Posterior vena cava (tissue), 2 donors: ENCODE measurements at regions of chr17 and their contacts with region 1.

Region 1: DNA sequence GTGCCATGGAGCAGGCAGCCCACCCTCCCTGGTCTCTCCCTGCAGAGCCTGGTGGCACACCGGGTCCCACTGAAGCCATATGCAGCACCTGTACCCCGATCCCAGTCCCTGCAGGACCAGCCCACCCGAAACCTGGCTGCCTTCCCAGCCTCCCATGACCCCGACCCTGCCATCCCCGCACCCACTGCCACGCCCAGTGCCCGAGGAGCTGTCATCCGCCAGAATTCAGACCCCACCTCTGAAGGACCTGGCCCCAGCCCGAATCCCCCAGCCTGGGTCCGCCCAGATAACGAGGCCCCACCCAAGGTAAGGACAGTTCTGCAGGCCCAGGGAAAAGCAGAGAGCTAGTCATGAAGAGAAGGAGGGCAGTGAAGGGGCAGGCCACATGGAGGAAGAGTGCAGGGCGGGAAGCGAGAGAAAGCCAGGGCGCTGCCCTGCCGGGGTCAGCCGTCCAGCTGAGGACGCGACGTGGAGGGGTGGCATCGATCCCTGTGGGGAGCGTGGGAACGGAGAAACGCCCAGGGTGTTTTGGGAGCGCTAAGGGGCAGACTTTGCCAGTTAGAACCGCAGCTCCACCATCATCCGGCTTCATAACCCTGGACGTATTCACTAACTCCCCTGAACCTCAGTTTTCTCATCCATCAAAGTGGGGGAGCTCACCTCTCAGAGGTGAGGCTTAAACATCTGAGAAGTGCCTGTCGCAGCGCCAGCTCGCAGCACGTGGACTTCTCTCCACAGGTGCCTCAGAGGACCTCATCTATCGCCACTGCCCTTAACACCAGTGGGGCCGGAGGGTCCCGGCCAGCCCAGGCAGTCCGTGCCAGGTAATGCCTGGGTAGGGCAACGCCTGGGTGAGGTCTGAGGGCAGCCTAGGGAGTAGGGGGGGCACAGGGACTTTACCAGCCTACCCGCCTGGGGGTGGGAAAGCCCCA is 7.7 kb upstream of the C17orf107 start:
- DNase-seq: no peak

Region 2: DNA sequence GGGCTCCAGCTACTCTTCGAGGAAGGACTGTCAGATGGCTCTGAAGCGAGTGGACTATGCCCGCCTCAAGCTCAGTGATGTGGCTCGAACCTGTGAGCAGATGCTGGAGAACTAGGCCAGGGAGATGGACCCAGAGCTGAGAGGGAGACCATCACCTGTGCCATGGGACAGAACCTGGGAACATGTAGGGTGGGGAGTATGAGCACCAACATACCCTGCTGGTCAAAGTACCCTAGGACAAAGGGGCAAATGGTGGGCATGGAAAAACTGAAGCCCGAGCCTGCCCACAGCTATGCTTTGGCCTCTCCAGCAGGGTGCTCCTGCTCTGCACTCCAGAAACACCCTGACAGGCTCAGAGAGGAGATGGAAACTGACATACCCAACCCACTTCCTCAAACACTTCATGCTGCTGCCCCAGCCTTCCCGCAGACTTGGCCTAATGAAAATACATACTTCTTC is 158.6 kb before region 1 on chr17:
- intact Hi-C with region 1: loop called (anchors 1 to 2 kb)
- DNase-seq: no peak

Region 3: DNA sequence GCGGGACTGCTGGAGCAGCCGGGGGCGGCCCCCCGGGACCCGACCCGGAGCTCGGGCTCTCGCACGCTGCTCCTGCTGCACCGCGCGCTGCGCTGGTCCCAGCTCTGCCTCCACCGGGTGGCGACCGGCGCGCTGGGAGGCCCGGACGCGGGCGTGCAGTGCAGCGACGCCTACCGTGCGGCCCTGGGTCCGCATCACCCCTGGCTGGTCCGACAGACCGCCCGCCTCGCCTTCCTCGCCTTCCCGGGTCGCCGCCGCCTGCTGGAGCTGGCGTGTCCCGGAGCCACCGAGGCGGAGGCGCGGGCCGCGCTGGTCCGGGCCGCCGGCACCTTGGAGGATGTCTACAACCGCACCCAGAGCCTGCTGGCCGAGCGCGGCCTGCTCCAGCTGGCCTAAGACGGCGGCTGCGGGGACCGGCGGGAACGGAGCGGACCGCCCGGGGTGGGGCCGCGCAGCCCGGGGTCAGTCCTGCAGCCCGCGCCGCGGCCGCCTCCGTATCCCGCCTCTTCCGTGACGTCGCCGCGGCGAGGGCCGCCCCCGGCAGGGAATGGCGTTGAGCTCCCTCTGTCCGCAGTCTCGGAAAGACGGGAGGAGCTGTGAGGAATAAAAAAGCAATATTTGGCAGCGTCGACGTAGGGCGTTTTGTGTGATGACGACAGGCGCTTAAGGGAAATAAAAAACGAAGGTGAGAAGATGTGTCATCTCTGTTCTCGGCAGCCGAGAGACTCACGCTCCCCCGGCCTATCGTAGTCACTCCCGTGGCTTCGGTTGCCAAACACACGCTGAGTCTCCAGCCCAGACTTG is 101.6 kb before region 1 on chr17:
- intact Hi-C with region 1: loop called (anchors 5 kb)
- DNase-seq: peak; percentile 96

Region 4: DNA sequence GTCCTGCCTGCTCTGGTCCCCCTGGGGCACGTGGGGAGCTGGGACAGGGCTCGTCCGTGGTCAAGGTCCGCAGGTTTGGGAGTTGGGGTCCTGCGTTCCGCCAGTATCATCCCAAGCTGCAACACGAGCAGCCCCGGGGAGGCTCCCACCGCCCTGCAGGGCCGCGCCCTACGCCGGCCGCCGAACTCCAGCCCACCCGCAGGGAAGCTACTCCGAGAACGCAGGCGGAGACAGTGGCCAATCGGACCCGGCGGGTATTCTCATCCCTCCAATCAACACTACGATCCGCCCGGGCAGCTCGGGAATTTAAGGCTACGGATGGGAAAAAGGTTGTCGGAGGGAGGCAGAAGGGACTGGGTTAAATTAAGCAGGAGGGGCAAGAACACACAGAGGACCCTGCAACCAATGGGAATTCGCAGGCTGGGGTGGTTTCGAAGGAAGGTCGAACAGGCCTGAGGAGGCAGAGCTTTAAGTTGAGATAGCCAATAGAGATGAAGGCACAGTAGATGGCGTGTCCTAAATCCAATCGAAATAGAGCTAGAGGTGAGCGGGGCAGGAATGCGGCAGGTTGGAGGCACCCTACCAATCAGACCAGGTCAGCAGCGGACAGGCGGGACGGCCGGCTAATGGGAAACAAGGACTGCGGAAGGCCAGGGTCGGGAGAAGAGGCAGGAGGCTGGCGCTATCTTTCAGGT is 75.3 kb after region 1 on chr17:
- intact Hi-C with region 1: no loop called
- DNase-seq: peak; percentile 99

Region 5: DNA sequence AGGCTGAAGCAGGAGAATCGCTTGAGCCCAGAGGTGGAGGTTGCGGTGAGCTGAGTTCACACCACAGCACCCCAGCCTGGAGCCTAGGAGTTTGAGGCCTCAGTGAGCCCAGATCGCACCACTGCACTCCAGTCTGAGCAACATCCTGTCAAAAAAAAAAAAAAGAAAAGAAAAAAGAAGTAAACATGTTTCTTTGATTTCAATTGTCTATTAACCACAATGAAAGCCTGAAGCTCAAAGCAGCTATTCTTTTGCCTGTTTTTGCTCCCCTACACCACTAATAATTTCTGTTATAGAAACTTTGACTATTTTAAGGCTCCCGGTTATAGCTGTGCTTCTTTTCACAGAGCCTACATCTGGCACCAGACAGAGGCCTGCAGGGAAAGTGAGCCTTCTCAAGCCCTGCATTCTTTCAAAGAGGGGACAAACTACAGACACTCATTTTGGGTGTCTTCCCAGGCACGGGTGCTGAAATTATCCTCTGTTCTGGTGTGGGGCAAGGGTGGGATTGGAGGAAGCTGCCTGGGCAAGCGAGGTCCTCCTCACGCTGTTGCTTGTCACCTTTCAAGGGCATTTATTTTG is 157.7 kb after region 1 on chr17:
- intact Hi-C with region 1: no loop called
- DNase-seq: no peak

Region 6: GRCh38 chr17:6555331-6556120 is 1663.8 kb after region 1 on chr17:
- intact Hi-C with region 1: no loop called
- DNase-seq: no peak